ENCODE measurements at regions of chr16 and their contacts with region 1.

Region 1: GRCh38 chr16:30922960-30923535 is 324 bp upstream of the FBXL19 start:
- DNase-seq: peak; percentile 95
- H3K4me3 Mint-ChIP-seq: peak overlapping the region; percentile 99
- H3K27ac Mint-ChIP-seq: peak overlapping the region; percentile 100
- H3K4me1 Mint-ChIP-seq: peaks cover 19% of the 10 kb centered on the region
- H3K27me3 Mint-ChIP-seq: no peaks in the 10 kb centered on the region

Region 2: GRCh38 chr16:30698139-30698815 is 224.8 kb before region 1 on chr16:
- intact Hi-C with region 1: loop called (anchors 1 kb)
- DNase-seq: peak; percentile 99
- H3K4me3 Mint-ChIP-seq: peak overlapping the region; percentile 100
- H3K27ac Mint-ChIP-seq: peak overlapping the region; percentile 100
- H3K4me1 Mint-ChIP-seq: peaks cover 29% of the 10 kb centered on the region
- H3K27me3 Mint-ChIP-seq: no peaks in the 10 kb centered on the region

Region 3: GRCh38 chr16:30844671-30845449 is 78.2 kb before region 1 on chr16:
- intact Hi-C with region 1: loop called (anchors 1 kb)
- DNase-seq: peak; percentile 74
- H3K4me3 Mint-ChIP-seq: no peak overlapping the region
- H3K27ac Mint-ChIP-seq: peak overlapping the region; percentile 40
- H3K4me1 Mint-ChIP-seq: peaks cover 10% of the 10 kb centered on the region
- H3K27me3 Mint-ChIP-seq: no peaks in the 10 kb centered on the region

Region 4: GRCh38 chr16:30941600-30942425 is 18.8 kb after region 1 on chr16:
- intact Hi-C with region 1: loop called (anchors 1 kb)
- DNase-seq: peak; percentile 70
- H3K4me3 Mint-ChIP-seq: peak overlapping the region; percentile 60
- H3K27ac Mint-ChIP-seq: peak overlapping the region; percentile 69
- H3K4me1 Mint-ChIP-seq: peaks cover 23% of the 10 kb centered on the region
- H3K27me3 Mint-ChIP-seq: no peaks in the 10 kb centered on the region

Region 5: GRCh38 chr16:31073968-31074813 is 151.1 kb after region 1 on chr16 and contains the starts of genes ZNF646 and ZNF668:
- intact Hi-C with region 1: loop called (anchors 1 kb)
- DNase-seq: peak; percentile 98
- H3K4me3 Mint-ChIP-seq: peak within 1 kb of the TSS; percentile 99
- H3K27ac Mint-ChIP-seq: peak within 1 kb of the TSS; percentile 96
- H3K4me1 Mint-ChIP-seq: peaks cover 23% of the 10 kb centered on the region
- H3K27me3 Mint-ChIP-seq: no peaks in the 10 kb centered on the region
- total RNA-seq, gene ZNF646: 24.4 and 24.5 TPM in 2 replicates
- total RNA-seq, gene ZNF668: 12.7 and 13.2 TPM in 2 replicates